Caco-2 (cell line): ENCODE measurements at regions of chr3 and their contacts with region 1.

Region 1: GRCh38 chr3:120678331-120678947 is 3.6 kb downstream of the HGD start:
- DNase-seq: peak; percentile 60 to 65
- H3K4me3 ChIP-seq: peak overlapping the region; percentile 17
- H3K4me3 Mint-ChIP-seq: peak overlapping the region; percentile 76
- H3K27ac Mint-ChIP-seq: peak overlapping the region; percentile 93
- H3K4me1 ChIP-seq: peaks cover 46% of the 10 kb centered on the region
- H3K4me1 Mint-ChIP-seq: peaks cover 28% of the 10 kb centered on the region
- H3K27me3 ChIP-seq: no peaks in the 10 kb centered on the region
- H3K27me3 Mint-ChIP-seq: no peaks in the 10 kb centered on the region
- CTCF ChIP-seq: no peak

Region 2: GRCh38 chr3:120693439-120694186 is 15.2 kb after region 1 on chr3:
- CTCF ChIA-PET with region 1: no interaction called
- POLR2A ChIA-PET with region 1: interaction called, 7 read pairs
- intact Hi-C with region 1: loop called (anchors 1 kb)
- DNase-seq: no peak
- H3K4me3 ChIP-seq: no peak overlapping the region
- H3K4me3 Mint-ChIP-seq: no peak overlapping the region
- H3K27ac Mint-ChIP-seq: peak overlapping the region; percentile 60
- H3K4me1 ChIP-seq: peaks cover 24% of the 10 kb centered on the region
- H3K4me1 Mint-ChIP-seq: peaks cover 11% of the 10 kb centered on the region
- H3K27me3 ChIP-seq: no peaks in the 10 kb centered on the region
- H3K27me3 Mint-ChIP-seq: no peaks in the 10 kb centered on the region
- CTCF ChIP-seq: no peak